ENCODE measurements at regions of chr20 and their contacts with region 1.

Region 1: GRCh38 chr20:44609511-44610312 is 27.3 kb downstream of the PKIG start:
- DNase-seq: peak; percentile 97 to 99
- H3K4me3 ChIP-seq: peak overlapping the region; percentile 19
- H3K4me3 Mint-ChIP-seq: peak overlapping the region; percentile 71
- H3K27ac Mint-ChIP-seq: peak overlapping the region; percentile 91
- H3K4me1 ChIP-seq: peaks cover 12% of the 10 kb centered on the region
- H3K4me1 Mint-ChIP-seq: peaks cover 9% of the 10 kb centered on the region
- H3K27me3 ChIP-seq: no peaks in the 10 kb centered on the region
- H3K27me3 Mint-ChIP-seq: no peaks in the 10 kb centered on the region
- CTCF ChIP-seq: peak; percentile 100

Region 2: DNA sequence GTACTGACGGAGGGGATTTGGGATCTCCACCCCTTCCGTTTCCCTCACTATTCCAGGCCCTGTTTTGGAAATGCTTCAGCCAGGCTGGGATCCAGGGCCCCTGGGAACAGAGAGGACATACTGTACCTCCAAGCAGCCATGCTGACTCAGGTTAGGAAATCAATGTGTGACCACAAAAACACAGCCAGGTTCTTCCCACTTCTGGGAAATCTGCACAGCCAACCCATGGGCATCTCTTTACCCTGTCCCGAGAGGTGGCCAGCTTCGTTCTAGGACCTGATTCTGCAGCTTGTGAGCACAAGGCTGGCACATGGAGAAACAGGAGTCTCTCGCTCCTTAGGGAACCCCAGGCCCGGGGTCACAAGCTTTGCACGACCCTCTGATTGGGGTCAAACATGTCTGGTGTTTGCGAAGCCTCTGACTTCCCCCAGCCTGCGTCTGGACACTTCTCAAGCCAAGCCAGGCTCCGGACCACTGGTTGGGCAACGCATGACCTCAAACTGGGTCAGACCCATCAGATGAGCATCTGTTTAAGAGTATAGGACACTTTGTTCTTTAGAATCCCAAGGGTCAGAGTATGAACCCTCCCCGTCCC is 142.3 kb before region 1 on chr20:
- CTCF ChIA-PET with region 1: interaction called, 13 read pairs
- POLR2A ChIA-PET with region 1: no interaction called
- intact Hi-C with region 1: loop called (anchors 2 kb)
- DNase-seq: peak in 1 of 2 experiments; percentile 27
- H3K4me3 ChIP-seq: no peak overlapping the region
- H3K4me3 Mint-ChIP-seq: no peak overlapping the region
- H3K27ac Mint-ChIP-seq: no peak overlapping the region
- H3K4me1 ChIP-seq: no peaks in the 10 kb centered on the region
- H3K4me1 Mint-ChIP-seq: no peaks in the 10 kb centered on the region
- H3K27me3 ChIP-seq: no peaks in the 10 kb centered on the region
- H3K27me3 Mint-ChIP-seq: no peaks in the 10 kb centered on the region
- CTCF ChIP-seq: no peak

Region 3: DNA sequence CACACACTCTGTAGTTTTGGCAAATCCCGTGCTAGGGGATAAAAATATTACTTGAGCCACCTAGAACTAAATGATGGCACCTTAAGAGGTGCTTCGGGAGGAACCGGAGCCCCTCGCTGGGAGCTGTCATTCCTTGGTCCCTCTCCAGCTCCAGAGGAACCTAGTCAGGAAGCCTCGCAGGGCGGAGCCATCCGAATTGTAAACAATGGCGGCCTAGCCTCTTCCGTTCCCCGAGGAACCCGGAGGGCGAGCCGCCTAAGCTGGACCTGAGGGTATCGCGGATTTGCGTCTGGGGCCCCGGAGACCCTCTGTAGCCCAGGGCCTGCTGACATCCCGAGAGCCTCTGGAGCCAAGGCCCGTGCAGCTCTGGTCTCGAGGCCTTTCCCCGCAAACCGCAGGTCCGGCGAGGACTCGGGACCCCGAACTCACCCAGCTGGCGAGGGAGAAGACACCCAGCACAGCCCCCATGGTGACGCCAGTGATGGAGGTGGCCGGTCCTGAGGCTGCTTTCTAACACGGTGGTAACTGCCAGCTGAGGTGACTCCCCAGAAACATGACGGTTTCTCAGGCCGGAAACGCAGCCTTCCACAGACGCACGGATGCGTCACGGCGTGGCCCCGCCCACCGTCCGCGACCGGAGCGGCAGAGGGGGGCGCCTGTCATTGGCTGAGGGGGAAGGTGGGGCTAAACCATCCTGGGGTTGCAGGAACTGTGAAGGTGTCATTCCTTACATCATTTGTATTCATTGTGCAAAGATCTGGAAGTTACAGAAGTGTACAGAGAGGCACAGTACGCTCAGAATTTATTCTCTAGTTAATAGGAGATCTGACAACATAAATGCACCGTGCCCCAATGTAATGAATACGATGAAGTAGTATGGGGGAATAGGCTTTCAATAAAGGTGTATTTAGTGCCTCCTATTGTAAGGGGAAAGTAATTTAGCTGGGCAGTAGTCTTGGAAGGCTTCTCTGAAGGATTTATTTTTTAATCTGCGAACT is 87.9 kb before region 1 on chr20 and contains the start of gene SERINC3:
- CTCF ChIA-PET with region 1: interaction called, 9 read pairs
- POLR2A ChIA-PET with region 1: no interaction called
- intact Hi-C with region 1: loop called (anchors 1 kb)
- DNase-seq: peak; percentile 98 to 100
- H3K4me3 ChIP-seq: peak within 1 kb of the TSS; percentile 77
- H3K4me3 Mint-ChIP-seq: peak within 1 kb of the TSS; percentile 68
- H3K27ac Mint-ChIP-seq: peak within 1 kb of the TSS; percentile 72
- H3K4me1 ChIP-seq: peaks cover 68% of the 10 kb centered on the region
- H3K4me1 Mint-ChIP-seq: peaks cover 68% of the 10 kb centered on the region
- H3K27me3 ChIP-seq: no peaks in the 10 kb centered on the region
- H3K27me3 Mint-ChIP-seq: no peaks in the 10 kb centered on the region
- CTCF ChIP-seq: peak in 1 of 2 experiments; percentile 22
- total RNA-seq, gene SERINC3: 179 and 185 TPM in 2 replicates

Region 4: GRCh38 chr20:44576297-44576696 is 33.4 kb before region 1 on chr20:
- CTCF ChIA-PET with region 1: interaction called, 9 read pairs
- POLR2A ChIA-PET with region 1: no interaction called
- intact Hi-C with region 1: loop called (anchors 1 kb)
- DNase-seq: peak in 1 of 2 experiments; percentile 48
- H3K4me3 ChIP-seq: no peak overlapping the region
- H3K4me3 Mint-ChIP-seq: no peak overlapping the region
- H3K27ac Mint-ChIP-seq: no peak overlapping the region
- H3K4me1 ChIP-seq: 0 out of 2 replicates have a peak, but pooled peaks cover 9% of the 10 kb centered on the region
- H3K4me1 Mint-ChIP-seq: peaks cover 21% of the 10 kb centered on the region
- H3K27me3 ChIP-seq: no peaks in the 10 kb centered on the region
- H3K27me3 Mint-ChIP-seq: no peaks in the 10 kb centered on the region
- CTCF ChIP-seq: peak; percentile 44 to 62